Activated CD8-positive, alpha-beta T cell treated with anti-CD3 and anti-CD28 coated beads, Interleukin-2, amount 10 ng/mL, durations not matched to agents 7 days and 5 days (primary cell): ENCODE measurements at regions of chr6 and their contacts with region 1.

Region 1: GRCh38 chr6:26196846-26197648 is 109.8 kb downstream of the HFE start:
- DNase-seq: peak; percentile 92
- ATAC-seq: peak; percentile 43
- H3K4me3 Mint-ChIP-seq: peak overlapping the region; percentile 99
- H3K27ac Mint-ChIP-seq: peak overlapping the region; percentile 93
- H3K4me1 Mint-ChIP-seq: peaks cover 50% of the 10 kb centered on the region
- H3K27me3 Mint-ChIP-seq: no peaks in the 10 kb centered on the region

Region 2: DNA sequence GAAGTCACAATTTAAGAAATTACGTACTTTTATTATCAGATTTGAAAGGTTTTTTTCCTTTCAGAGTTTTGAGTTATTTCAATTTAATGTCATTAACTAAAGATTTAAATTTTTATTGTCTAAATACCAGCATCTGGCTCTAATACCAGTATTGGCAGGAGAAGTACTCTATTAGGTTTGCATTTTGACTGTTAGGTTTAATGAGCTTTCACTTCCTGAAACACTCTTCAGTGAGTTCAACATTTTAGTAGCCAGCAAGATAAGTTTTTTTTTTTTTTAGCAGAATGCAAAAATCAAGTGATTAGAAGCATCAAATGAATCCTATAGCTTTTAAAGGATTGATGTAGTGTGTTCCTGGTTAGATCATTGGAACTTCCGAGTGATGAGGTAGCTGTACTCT is 579.0 kb before region 1 on chr6:
- CTCF ChIA-PET with region 1: no interaction called
- POLR2A ChIA-PET with region 1: no interaction called
- DNase-seq: no peak
- ATAC-seq: no peak
- H3K4me3 Mint-ChIP-seq: no peak overlapping the region
- H3K27ac Mint-ChIP-seq: no peak overlapping the region
- H3K4me1 Mint-ChIP-seq: no peaks in the 10 kb centered on the region
- H3K27me3 Mint-ChIP-seq: no peaks in the 10 kb centered on the region

Region 3: DNA sequence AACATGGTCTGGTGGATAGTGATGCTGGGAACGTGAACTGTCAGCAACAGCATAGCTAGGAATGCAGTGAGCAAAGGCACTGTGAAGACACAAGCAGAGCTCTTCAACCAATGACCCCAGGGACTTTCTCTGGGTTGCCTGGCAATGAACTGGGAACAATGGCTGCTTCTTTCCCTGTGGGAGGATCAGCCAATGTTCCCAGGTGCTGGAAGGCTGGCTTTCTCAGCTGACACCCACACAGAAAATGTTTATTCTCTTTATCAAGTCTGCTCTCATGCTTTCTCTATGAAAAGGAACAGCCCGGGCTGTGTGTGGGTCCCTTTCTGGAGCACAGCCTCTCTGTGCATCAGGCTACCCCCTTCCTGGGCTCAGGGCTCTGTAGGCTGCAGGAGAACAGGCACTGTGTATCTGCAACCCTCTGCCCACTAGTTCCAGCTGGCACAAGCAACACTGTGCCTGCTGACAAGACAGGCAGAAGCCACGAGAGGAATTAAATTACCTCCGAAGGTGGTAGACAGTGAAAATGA is 55.6 kb before region 1 on chr6:
- CTCF ChIA-PET with region 1: no interaction called
- POLR2A ChIA-PET with region 1: no interaction called
- DNase-seq: no peak
- ATAC-seq: no peak
- H3K4me3 Mint-ChIP-seq: no peak overlapping the region
- H3K27ac Mint-ChIP-seq: no peak overlapping the region
- H3K4me1 Mint-ChIP-seq: peaks cover 5% of the 10 kb centered on the region
- H3K27me3 Mint-ChIP-seq: no peaks in the 10 kb centered on the region

Region 4: DNA sequence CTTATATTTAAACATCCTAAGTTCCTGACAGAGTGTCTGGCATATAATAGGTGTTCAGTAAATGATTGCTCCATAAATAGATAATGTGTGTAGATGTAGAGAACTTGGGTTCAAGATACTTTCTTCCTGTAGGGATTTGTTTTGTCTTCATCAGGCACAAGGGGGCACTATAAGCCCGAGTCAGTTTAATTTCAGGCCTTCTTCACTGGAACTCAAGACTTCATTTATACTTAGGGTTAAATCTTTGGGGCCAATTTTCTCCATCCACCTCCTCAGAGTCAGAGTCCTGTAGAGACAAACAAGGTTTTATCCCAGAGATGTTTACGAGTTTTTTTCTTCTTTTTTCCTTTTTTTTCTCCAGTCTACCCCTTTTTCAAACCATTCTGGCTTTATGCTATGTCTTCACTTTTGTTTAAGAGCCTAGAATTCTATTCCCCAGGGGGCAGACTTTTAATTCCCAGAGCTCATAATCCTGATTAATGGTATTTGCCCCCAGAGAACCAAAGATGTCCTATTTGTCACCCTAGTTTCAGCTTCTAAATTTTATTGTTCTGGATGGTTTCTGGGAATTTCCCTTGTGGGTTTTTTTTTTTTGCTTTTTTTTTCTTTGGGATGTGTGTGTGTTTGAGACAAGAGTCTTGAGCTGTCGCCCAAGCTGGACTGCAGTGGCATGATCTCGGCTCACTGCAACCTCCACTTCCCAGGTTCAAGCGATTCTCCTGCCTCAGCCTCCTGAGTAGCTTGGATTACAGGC is 21.4 kb before region 1 on chr6:
- CTCF ChIA-PET with region 1: interaction called, 10 read pairs
- POLR2A ChIA-PET with region 1: interaction called, 1,978 read pairs
- DNase-seq: peak; percentile 82
- ATAC-seq: peak; percentile 11
- H3K4me3 Mint-ChIP-seq: peak overlapping the region; percentile 38
- H3K27ac Mint-ChIP-seq: peak overlapping the region; percentile 59
- H3K4me1 Mint-ChIP-seq: peaks cover 42% of the 10 kb centered on the region
- H3K27me3 Mint-ChIP-seq: no peaks in the 10 kb centered on the region

Region 5: DNA sequence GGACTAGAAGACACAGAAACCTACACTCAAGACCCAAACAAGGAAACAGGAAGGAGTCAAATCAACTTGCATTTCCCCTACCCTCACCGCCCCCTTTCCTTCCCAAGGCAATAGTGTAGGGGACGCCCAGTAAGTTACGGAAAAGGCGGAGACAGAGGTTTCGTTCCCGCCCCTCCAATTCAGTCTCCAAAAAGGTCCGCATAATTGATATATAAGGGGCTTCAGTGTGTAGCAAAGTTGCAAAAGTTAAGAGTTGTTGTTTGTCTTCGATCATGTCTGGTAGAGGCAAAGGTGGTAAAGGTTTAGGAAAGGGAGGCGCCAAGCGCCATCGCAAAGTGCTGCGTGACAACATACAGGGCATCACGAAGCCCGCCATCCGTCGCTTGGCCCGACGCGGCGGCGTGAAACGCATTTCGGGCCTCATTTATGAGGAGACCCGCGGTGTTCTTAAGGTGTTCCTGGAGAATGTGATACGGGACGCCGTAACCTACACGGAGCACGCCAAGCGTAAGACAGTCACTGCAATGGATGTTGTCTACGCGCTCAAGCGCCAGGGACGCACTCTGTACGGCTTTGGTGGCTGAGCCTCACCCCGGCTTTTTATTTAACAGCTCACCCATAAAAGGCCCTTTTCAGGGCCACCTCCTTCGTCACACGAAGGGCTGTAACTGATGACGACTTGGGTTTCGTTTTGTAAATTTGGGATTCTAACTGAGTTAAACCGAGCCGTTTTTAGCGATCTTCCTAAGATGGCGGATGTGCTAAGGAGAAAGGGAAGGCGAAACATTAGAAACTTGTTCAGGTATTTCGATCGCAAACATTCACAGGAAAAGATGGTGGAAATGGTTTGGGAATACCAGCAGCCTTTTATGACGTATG is 43.3 kb after region 1 on chr6:
- CTCF ChIA-PET with region 1: no interaction called
- POLR2A ChIA-PET with region 1: interaction called, 1,100 read pairs
- DNase-seq: peak; percentile 94
- ATAC-seq: peak; percentile 81
- H3K4me3 Mint-ChIP-seq: peak overlapping the region; percentile 74
- H3K27ac Mint-ChIP-seq: peak overlapping the region; percentile 96
- H3K4me1 Mint-ChIP-seq: peaks cover 51% of the 10 kb centered on the region
- H3K27me3 Mint-ChIP-seq: peaks cover 2% of the 10 kb centered on the region

Region 6: DNA sequence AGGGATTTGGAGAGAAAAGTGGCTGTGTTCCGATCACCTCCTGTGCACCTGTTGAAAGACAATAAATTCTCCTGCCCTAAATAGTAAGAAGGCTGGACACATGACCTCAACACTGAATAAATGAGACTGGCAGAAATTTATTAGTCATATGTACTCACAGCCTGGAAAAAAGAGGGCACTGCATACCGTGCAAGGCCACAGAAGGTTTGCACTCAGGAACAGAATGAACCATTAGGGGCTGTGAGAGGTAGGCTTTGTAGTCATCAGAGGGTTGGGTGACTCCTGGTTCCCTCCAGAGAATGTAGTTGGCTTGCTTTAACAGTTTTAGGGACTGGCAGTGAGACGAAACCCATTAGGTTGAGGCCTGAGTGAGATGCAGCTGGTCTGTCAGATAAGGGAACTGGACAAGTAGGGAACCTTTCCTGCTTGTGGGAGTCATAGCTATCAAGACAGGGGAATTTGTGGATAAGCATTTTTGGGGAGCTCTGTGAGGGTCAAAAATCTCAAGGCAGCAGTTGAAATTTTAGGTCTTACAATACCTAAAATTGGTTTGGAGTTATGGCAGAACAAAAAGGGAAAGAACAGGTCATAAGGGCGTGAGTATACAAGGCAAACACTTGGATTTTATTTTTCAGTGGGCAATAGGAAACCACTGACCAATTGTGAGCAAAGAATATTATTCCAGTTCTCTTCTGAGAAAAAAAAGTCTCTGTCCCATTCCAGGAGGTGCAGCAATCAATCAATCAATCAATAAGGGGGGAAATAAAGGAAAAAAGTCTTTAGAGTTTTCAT is 100.0 kb after region 1 on chr6:
- CTCF ChIA-PET with region 1: no interaction called
- POLR2A ChIA-PET with region 1: no interaction called
- DNase-seq: no peak
- ATAC-seq: no peak
- H3K4me3 Mint-ChIP-seq: no peak overlapping the region
- H3K27ac Mint-ChIP-seq: no peak overlapping the region
- H3K4me1 Mint-ChIP-seq: peaks cover 27% of the 10 kb centered on the region
- H3K27me3 Mint-ChIP-seq: peaks cover 5% of the 10 kb centered on the region

Region 7: GRCh38 chr6:26659042-26659999 is 462.3 kb after region 1 on chr6 and contains the start of gene ZNF322:
- CTCF ChIA-PET with region 1: no interaction called
- POLR2A ChIA-PET with region 1: no interaction called
- DNase-seq: peak; percentile 93
- ATAC-seq: peak; percentile 99
- H3K4me3 Mint-ChIP-seq: peak within 1 kb of the TSS; percentile 72
- H3K27ac Mint-ChIP-seq: peak within 1 kb of the TSS; percentile 58
- H3K4me1 Mint-ChIP-seq: peaks cover 15% of the 10 kb centered on the region
- H3K27me3 Mint-ChIP-seq: peaks cover 16% of the 10 kb centered on the region
- total RNA-seq, gene ZNF322: 9.1 to 9.5 TPM

Region 8: GRCh38 chr6:27138837-27139755 is 942.0 kb after region 1 on chr6:
- CTCF ChIA-PET with region 1: no interaction called
- POLR2A ChIA-PET with region 1: interaction called, 68 read pairs
- DNase-seq: peak; percentile 87
- ATAC-seq: peak; percentile 68
- H3K4me3 Mint-ChIP-seq: peak overlapping the region; percentile 95
- H3K27ac Mint-ChIP-seq: peak overlapping the region; percentile 98
- H3K4me1 Mint-ChIP-seq: peaks cover 71% of the 10 kb centered on the region
- H3K27me3 Mint-ChIP-seq: no peaks in the 10 kb centered on the region

Region 9: DNA sequence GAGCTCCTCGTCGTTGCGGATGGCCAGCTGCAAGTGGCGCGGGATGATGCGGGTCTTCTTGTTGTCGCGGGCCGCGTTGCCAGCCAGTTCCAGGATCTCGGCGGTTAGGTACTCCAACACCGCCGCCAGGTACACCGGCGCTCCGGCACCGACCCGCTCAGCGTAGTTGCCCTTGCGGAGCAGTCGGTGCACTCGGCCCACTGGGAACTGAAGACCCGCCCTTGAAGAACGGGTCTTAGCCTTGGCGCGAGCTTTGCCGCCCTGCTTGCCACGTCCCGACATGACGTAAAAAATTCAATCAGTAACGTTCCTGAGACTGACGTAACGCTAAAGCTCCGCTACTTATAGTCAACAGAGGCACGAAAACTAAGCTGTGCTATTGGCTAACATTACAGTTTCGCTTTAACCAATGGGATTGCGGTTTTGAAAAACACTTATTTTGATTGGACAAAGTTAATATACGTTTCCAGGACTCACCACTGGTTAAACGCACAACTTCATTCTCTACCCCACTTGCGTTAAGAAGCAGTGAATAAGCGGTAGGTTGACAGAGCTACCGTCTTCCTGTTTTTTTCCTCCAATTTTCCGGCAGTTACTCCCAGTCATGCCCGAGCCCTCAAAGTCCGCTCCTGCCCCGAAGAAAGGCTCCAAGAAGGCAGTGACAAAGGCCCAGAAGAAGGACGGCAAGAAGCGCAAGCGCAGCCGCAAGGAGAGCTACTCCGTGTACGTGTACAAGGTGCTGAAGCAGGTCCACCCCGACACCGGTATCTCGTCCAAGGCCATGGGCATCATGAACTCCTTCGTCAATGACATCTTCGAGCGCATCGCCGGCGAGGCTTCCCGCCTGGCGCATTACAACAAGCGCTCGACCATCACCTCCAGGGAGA is 1641.3 kb after region 1 on chr6:
- CTCF ChIA-PET with region 1: no interaction called
- POLR2A ChIA-PET with region 1: interaction called, 46 read pairs
- DNase-seq: peak; percentile 92
- ATAC-seq: peak; percentile 78
- H3K4me3 Mint-ChIP-seq: no peak overlapping the region
- H3K27ac Mint-ChIP-seq: no peak overlapping the region
- H3K4me1 Mint-ChIP-seq: peaks cover 33% of the 10 kb centered on the region
- H3K27me3 Mint-ChIP-seq: no peaks in the 10 kb centered on the region